ENCODE measurements at regions of chr3 and their contacts with region 1.

Region 1: DNA sequence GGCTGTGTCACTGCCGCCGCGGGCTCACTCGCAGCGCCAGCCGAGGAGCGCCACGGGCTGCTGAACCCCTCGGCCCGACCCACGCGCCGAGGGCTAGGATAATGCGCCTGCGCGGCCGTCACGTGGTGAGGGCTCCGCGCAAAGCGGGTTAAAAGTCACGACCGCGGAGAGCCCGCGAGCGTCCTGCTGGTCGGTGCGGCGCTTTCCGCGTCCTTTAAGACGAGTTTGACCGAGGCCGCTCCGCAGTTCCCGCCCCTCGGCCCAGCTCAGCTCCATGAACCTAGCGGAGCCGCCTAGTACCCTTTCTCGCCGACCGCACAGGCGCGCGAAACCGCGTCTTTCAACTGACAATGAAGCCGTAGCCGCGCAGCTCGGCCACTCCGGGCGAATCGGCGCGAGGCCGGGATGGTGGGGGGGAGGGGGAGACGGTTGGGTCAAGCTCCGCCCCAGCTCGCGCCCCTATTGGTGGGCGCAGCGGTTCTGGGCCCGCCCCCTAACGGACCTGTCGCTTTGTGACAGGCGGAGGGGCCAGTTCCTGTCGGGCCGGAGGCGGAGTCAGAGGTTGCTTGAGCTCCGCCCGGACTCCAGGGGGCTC is 636 bp upstream of the STT3B start:
- DNase-seq: peak; percentile 96 to 99 (median 98)
- ATAC-seq: peak; percentile 91
- H3K4me3 ChIP-seq: peak overlapping the region; percentile 76
- H3K4me3 Mint-ChIP-seq: peak overlapping the region in 7 of 10 donors; percentile 96 to 100 (median 98)
- H3K27ac ChIP-seq: peak overlapping the region; percentile 94
- H3K27ac Mint-ChIP-seq: peak overlapping the region; percentile 95 to 99 (median 98)
- H3K4me1 ChIP-seq: peaks cover 4 to 31% of the 10 kb centered on the region in 2 donors
- H3K4me1 Mint-ChIP-seq: peaks cover 0 to 25% (median 18%) of the 10 kb centered on the region in 7 donors
- H3K27me3 ChIP-seq: no peaks in the 10 kb centered on the region
- H3K27me3 Mint-ChIP-seq: no peaks in the 10 kb centered on the region

Region 2: GRCh38 chr3:30768703-30769685 is 763.1 kb before region 1 on chr3:
- CTCF ChIA-PET with region 1: no interaction called
- POLR2A ChIA-PET with region 1: no interaction called
- intact Hi-C with region 1: loop called in 1 of 2 experiments (anchors 5 kb)
- DNase-seq: peak; percentile 39 to 69 (median 62)
- ATAC-seq: peak; percentile 48
- H3K4me3 ChIP-seq: no peak overlapping the region
- H3K4me3 Mint-ChIP-seq: peak overlapping the region in 1 of 10 donors; percentile 35
- H3K27ac ChIP-seq: no peak overlapping the region
- H3K27ac Mint-ChIP-seq: no peak overlapping the region
- H3K4me1 ChIP-seq: no peaks in the 10 kb centered on the region
- H3K4me1 Mint-ChIP-seq: peaks cover 0 to 7% (median 0%) of the 10 kb centered on the region in 7 donors
- H3K27me3 ChIP-seq: no peaks in the 10 kb centered on the region
- H3K27me3 Mint-ChIP-seq: peaks cover 0 to 32% (median 3%) of the 10 kb centered on the region in 5 donors

Region 3: DNA sequence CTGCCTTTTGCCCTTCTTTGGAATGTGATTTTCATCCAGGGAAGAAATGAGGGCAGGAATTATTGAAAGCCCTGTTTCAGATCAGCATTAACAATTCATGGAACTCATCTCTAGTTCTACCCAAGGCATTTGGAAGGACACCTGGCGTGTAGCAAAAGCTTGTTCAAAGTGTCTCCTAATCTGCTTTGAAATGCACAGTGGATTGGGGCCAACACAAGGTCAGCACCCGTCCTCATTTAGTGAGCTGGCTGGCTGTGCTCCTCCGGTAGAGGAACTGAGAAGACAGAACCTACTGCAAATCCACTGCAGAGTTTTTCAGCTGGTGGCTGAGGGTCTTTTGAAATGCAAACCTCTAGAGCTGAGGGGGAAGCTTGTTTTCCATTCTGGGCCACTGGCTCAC is 140.9 kb before region 1 on chr3:
- CTCF ChIA-PET with region 1: no interaction called
- POLR2A ChIA-PET with region 1: no interaction called
- intact Hi-C with region 1: loop called in 1 of 2 experiments (anchors 5 kb)
- DNase-seq: no peak
- ATAC-seq: no peak
- H3K4me3 ChIP-seq: no peak overlapping the region
- H3K4me3 Mint-ChIP-seq: no peak overlapping the region
- H3K27ac ChIP-seq: no peak overlapping the region
- H3K27ac Mint-ChIP-seq: no peak overlapping the region
- H3K4me1 ChIP-seq: no peaks in the 10 kb centered on the region
- H3K4me1 Mint-ChIP-seq: peaks cover 10 to 19% (median 15%) of the 10 kb centered on the region in 7 donors
- H3K27me3 ChIP-seq: no peaks in the 10 kb centered on the region
- H3K27me3 Mint-ChIP-seq: no peaks in the 10 kb centered on the region

Region 4: DNA sequence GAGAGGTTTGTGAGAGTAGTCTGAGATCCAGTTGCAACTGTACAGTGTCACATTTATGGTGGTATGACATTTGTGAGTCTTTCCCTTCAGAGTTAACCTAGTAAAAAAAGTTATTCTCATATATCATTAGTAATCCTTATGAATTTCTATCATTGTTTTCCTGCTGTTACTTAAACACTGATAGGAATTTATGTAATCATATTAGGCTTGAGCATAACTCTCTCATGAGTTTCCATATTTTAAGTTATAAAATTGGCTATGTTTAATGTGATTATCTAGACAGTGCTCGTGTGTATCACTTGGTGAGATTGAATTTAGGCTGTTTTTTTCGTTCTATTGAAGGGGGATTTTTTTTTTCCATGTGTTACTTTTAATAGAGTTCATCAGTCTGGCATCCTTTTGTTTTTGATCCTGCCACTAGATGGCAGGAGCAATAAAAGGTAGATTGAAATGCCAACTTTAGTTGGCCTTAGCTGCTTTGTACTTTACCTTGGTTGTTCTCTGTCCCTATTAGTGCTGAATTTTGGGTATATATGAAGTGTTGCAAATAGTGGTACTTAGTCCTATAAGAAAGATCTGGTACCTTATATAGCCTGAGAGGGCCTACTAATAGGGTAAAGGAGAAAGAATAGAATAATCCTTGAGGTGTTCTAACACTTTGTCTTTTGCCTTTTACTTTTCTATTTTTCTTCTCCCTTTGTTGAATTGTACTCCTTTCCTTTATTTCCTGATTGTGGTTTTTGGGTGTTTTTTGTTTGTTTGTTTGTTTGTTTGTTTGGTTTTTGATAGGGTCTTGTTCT is 18.6 kb after region 1 on chr3:
- CTCF ChIA-PET with region 1: interaction called, 11 read pairs
- POLR2A ChIA-PET with region 1: interaction called, 23 read pairs
- intact Hi-C with region 1: loop called (anchors 1 to 2 kb)
- DNase-seq: peak in 5 of 9 donors; percentile 21 to 47 (median 29)
- ATAC-seq: peak; percentile 79
- H3K4me3 ChIP-seq: no peak overlapping the region
- H3K4me3 Mint-ChIP-seq: peak overlapping the region; percentile 0 to 69 (median 34)
- H3K27ac ChIP-seq: peak overlapping the region; percentile 1
- H3K27ac Mint-ChIP-seq: peak overlapping the region in 8 of 9 donors; percentile 19 to 79 (median 48)
- H3K4me1 ChIP-seq: peaks cover 20 to 40% of the 10 kb centered on the region in 2 donors
- H3K4me1 Mint-ChIP-seq: peaks cover 65 to 94% (median 92%) of the 10 kb centered on the region in 7 donors
- H3K27me3 ChIP-seq: no peaks in the 10 kb centered on the region
- H3K27me3 Mint-ChIP-seq: no peaks in the 10 kb centered on the region

Region 5: GRCh38 chr3:32113566-32113965 is 581.5 kb after region 1 on chr3:
- CTCF ChIA-PET with region 1: no interaction called
- POLR2A ChIA-PET with region 1: interaction called, 4 read pairs
- intact Hi-C with region 1: loop called (anchors 1 to 2 kb)
- DNase-seq: no peak
- ATAC-seq: no peak
- H3K4me3 ChIP-seq: no peak overlapping the region
- H3K4me3 Mint-ChIP-seq: peak overlapping the region in 8 of 10 donors; percentile 70 to 90 (median 82)
- H3K27ac ChIP-seq: no peak overlapping the region
- H3K27ac Mint-ChIP-seq: peak overlapping the region in 8 of 9 donors; percentile 74 to 95 (median 92)
- H3K4me1 ChIP-seq: peaks cover 18 to 25% of the 10 kb centered on the region in 2 donors
- H3K4me1 Mint-ChIP-seq: peaks cover 32 to 95% (median 82%) of the 10 kb centered on the region in 7 donors
- H3K27me3 ChIP-seq: no peaks in the 10 kb centered on the region
- H3K27me3 Mint-ChIP-seq: no peaks in the 10 kb centered on the region

Region 6: DNA sequence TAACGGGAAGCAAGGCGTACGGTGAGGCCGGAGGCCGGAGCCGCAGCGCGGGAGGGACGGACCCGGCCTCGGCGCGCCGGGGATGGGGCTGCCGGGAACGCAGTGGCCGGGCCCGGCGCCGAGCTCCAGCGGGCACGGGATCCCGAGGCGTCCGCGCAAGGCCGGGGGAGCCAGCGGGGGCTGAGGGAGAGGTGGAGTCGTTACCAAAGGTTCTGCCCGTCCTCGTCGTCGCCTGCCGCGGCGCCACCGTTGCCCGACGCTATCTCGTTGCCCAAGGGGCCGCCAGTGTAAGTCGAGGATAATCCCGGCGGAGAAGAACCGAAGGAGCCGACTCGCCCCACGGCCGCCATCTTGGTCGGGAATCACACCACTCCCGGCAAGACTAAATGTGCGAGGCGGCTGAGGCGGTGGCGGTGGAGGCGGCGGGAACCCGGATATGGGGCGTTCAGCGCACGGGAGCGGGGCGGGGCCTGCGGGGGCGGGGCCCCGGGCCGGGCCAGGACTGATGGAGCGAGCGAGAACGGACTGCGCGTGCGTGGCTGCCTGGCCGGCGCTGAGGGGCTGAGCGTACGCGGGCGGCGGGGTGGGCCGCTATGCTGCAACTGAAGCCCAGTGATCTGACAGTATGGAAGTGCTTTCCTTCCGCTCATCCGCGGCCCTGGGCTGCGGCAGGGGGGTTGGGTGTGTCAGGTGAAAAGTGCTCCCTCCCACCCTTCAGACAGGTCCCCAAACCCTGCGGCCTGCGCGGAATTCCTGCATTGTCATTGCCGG is 1038.5 kb after region 1 on chr3 and contains the start of gene DYNC1LI1:
- CTCF ChIA-PET with region 1: no interaction called
- POLR2A ChIA-PET with region 1: no interaction called
- intact Hi-C with region 1: loop called in 1 of 2 experiments (anchors 2 kb)
- DNase-seq: peak; percentile 81 to 96 (median 88)
- ATAC-seq: peak; percentile 98
- H3K4me3 ChIP-seq: peak within 1 kb of the TSS; percentile 68
- H3K4me3 Mint-ChIP-seq: peak within 1 kb of the TSS; percentile 84 to 96 (median 92)
- H3K27ac ChIP-seq: peak within 1 kb of the TSS; percentile 90
- H3K27ac Mint-ChIP-seq: peak within 1 kb of the TSS; percentile 71 to 93 (median 86)
- H3K4me1 ChIP-seq: peaks cover 5 to 17% of the 10 kb centered on the region in 2 donors
- H3K4me1 Mint-ChIP-seq: peaks cover 0 to 39% (median 31%) of the 10 kb centered on the region in 7 donors
- H3K27me3 ChIP-seq: no peaks in the 10 kb centered on the region
- H3K27me3 Mint-ChIP-seq: no peaks in the 10 kb centered on the region
- total RNA-seq, gene DYNC1LI1: 26.1 to 28.5 (median 27.5) TPM

Region 7: DNA sequence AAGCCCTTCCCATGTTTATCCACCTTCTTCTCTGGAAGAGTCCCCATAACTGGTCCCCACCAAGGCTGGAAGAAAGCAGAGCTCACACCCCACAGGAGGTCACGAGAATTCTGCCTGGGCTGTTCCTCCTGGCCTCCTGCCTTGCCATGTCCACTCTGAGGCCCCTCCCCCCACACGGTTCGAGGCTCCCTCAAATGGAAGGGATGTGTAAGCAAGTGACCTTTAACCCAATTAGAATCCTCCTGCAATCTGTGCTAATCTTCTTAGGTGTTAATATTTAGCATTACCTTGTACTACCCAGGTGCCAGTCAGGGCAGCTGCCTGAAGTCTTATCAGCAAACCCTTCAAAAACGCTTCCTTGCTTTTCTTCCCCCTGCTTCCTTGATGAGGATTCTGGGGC is 1071.0 kb after region 1 on chr3:
- CTCF ChIA-PET with region 1: no interaction called
- POLR2A ChIA-PET with region 1: no interaction called
- intact Hi-C with region 1: no loop called
- DNase-seq: no peak
- ATAC-seq: no peak
- H3K4me3 ChIP-seq: no peak overlapping the region
- H3K4me3 Mint-ChIP-seq: no peak overlapping the region
- H3K27ac ChIP-seq: no peak overlapping the region
- H3K27ac Mint-ChIP-seq: peak overlapping the region in 1 of 9 donors; percentile 62
- H3K4me1 ChIP-seq: no peaks in the 10 kb centered on the region
- H3K4me1 Mint-ChIP-seq: no peaks in the 10 kb centered on the region
- H3K27me3 ChIP-seq: no peaks in the 10 kb centered on the region
- H3K27me3 Mint-ChIP-seq: peaks cover 2 to 21% (median 11%) of the 10 kb centered on the region in 5 donors

Measured in naive thymus-derived CD4-positive, alpha-beta T cell (primary cell).